Activated B cell treated with CpG ODN at 0.5 μM for 24 hours (primary cell): ENCODE measurements at regions of chr9 and their contacts with region 1.

Region 1: DNA sequence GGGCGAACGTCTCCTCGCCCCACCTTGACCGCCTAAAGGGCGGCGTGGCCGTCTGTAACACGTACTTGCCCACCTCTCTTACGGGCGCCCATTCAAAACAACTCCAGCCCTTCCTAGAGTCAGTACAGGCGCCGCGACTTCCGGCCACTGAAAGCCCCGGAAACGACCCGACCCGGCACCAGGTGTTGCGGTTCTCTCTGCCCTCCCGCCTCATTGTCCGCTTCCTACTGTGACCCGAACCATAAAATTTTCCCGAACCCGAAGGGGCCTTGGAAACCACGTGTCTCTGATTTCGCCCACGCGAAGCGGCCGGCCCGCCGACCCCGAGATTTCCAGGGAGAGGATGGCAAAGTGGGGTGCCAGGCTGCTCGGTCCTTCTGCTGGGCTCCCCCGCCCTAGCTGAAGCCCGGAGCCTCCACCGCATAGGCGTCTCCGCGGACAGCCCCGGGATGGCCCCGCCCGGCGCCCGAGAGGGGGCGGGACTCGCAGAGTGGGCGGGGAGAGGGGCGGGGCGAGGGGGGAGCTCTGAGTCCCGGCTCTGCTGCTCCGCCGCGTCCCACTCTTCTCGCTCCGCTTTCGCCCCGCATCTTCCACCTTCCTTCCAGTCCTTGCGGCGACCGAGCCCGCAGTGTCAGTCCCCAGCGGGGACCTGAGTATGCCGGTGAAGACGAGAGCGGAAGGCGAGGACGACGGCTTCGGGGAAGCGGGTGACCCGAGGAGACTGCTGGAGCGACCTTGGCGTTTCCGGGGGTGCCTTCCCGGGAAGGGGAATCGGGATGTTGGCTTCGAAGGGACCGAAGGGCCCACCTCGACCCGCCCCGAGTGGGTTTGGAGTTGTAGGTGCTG is 684 bp upstream of the PTGES2 start:
- DNase-seq: peak; percentile 90
- ATAC-seq: peak; percentile 79
- H3K4me3 Mint-ChIP-seq: peak overlapping the region; percentile 97
- H3K27ac Mint-ChIP-seq: peak overlapping the region; percentile 99
- H3K4me1 Mint-ChIP-seq: peaks cover 34% of the 10 kb centered on the region
- H3K27me3 Mint-ChIP-seq: peaks cover 3% of the 10 kb centered on the region
- CTCF ChIP-seq: no peak

Region 2: GRCh38 chr9:127224178-127224882 is 903.9 kb before region 1 on chr9:
- CTCF ChIA-PET with region 1: no interaction called
- POLR2A ChIA-PET with region 1: no interaction called
- intact Hi-C with region 1: loop called (anchors 10 kb)
- DNase-seq: peak; percentile 94
- ATAC-seq: peak; percentile 79
- H3K4me3 Mint-ChIP-seq: peak overlapping the region; percentile 85
- H3K27ac Mint-ChIP-seq: peak overlapping the region; percentile 73
- H3K4me1 Mint-ChIP-seq: peaks cover 41% of the 10 kb centered on the region
- H3K27me3 Mint-ChIP-seq: peaks cover 3% of the 10 kb centered on the region
- CTCF ChIP-seq: no peak

Region 3: DNA sequence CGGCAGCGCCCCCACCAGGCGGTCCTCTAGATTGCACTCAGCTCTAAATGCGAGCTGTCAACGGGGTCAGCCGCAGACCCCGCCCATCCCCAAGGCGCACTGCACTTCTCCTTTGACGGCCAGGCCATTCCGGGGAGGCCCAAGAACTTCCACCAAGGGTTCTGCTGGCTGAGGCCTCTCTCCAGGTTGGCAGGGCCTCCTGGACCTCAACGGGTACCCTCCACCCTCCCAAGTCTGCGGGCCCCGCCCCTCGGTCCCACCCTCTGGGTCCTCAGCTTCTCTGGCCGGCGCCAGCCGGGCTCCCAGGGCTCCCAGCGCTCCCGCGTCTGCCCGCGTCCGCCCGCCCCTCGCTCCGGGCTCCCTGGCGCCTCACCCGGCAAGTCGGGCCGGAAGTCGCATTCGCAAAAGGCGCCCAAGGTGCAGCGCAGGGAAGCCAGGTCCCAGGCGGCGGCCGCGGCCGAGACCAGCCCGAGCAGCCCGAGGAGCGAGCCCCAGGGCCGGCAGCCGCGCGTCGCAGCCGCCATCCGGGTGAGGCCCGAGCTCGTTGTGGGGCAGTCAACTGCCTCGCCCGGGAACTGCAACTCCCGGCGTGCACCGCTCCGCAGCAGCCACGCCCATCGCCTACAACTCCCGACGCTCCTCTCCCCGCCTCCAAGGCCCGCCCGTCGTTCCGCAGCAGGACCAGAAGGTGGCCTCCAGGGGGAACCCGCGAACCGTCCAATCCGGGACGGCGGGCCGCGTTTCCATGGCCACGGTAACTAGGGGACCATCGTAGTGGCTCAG is 393.3 kb before region 1 on chr9 and contains the start of gene TOR2A:
- CTCF ChIA-PET with region 1: no interaction called
- POLR2A ChIA-PET with region 1: no interaction called
- intact Hi-C with region 1: no loop called
- DNase-seq: peak; percentile 96
- ATAC-seq: peak; percentile 92
- H3K4me3 Mint-ChIP-seq: peak within 1 kb of the TSS; percentile 83
- H3K27ac Mint-ChIP-seq: peak within 1 kb of the TSS; percentile 91
- H3K4me1 Mint-ChIP-seq: peaks cover 13% of the 10 kb centered on the region
- H3K27me3 Mint-ChIP-seq: no peaks in the 10 kb centered on the region
- CTCF ChIP-seq: peak; percentile 15
- total RNA-seq, gene TOR2A: 13.8 and 15.1 TPM in 2 replicates

Region 4: DNA sequence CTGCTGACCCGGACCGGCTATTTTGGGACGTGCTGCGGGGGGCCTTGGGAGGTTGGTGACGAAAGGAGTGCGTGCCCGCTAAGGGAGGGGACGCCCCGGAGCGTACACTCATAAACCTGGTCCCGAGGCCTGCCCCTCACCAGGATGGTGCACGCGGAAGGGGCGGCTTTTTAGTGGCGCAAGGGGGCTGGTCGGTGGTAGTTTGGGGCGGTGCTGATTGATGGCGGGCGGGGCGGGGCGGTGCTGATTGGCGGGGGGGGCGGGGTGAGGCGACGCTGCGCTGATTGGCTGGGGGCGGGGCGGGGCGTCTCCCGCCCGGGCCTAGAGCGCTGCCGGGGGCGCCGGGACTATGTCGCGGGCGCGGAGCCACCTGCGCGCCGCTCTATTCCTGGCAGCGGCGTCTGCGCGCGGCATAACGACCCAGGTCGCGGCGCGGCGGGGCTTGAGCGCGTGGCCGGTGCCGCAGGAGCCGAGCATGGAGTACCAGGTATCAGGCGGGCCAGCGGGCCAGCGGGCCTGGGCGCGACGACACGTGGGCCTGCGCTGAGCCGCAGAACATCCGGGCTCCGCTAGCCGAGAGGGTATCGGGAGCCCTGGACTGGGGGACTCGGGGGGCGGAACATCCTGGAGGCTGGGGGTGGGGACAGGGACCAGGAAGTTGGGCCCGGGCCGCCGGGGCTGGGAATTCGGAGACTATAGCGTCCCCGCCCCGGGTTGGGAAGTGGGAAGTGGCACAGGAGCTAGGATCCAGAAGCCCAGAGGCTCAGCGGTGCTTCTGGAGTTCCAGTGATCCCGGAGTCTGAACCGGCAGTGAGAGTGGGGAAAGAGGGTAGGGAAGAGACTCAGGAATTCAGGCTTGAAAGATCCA is 325.4 kb before region 1 on chr9 and contains the start of gene FPGS:
- CTCF ChIA-PET with region 1: no interaction called
- POLR2A ChIA-PET with region 1: interaction called, 5 read pairs
- intact Hi-C with region 1: loop called (anchors 5 kb)
- DNase-seq: peak; percentile 81
- ATAC-seq: peak; percentile 84
- H3K4me3 Mint-ChIP-seq: peak within 1 kb of the TSS; percentile 93
- H3K27ac Mint-ChIP-seq: peak within 1 kb of the TSS; percentile 87
- H3K4me1 Mint-ChIP-seq: peaks cover 32% of the 10 kb centered on the region
- H3K27me3 Mint-ChIP-seq: no peaks in the 10 kb centered on the region
- CTCF ChIP-seq: no peak
- total RNA-seq, gene FPGS: 105 and 135 TPM in 2 replicates

Region 5: GRCh38 chr9:127987103-127987614 is 141.1 kb before region 1 on chr9:
- CTCF ChIA-PET with region 1: no interaction called
- POLR2A ChIA-PET with region 1: no interaction called
- intact Hi-C with region 1: no loop called
- DNase-seq: no peak
- ATAC-seq: peak; percentile 35
- H3K4me3 Mint-ChIP-seq: peak overlapping the region; percentile 36
- H3K27ac Mint-ChIP-seq: peak overlapping the region; percentile 85
- H3K4me1 Mint-ChIP-seq: peaks cover 65% of the 10 kb centered on the region
- H3K27me3 Mint-ChIP-seq: no peaks in the 10 kb centered on the region
- CTCF ChIP-seq: no peak

Region 6: DNA sequence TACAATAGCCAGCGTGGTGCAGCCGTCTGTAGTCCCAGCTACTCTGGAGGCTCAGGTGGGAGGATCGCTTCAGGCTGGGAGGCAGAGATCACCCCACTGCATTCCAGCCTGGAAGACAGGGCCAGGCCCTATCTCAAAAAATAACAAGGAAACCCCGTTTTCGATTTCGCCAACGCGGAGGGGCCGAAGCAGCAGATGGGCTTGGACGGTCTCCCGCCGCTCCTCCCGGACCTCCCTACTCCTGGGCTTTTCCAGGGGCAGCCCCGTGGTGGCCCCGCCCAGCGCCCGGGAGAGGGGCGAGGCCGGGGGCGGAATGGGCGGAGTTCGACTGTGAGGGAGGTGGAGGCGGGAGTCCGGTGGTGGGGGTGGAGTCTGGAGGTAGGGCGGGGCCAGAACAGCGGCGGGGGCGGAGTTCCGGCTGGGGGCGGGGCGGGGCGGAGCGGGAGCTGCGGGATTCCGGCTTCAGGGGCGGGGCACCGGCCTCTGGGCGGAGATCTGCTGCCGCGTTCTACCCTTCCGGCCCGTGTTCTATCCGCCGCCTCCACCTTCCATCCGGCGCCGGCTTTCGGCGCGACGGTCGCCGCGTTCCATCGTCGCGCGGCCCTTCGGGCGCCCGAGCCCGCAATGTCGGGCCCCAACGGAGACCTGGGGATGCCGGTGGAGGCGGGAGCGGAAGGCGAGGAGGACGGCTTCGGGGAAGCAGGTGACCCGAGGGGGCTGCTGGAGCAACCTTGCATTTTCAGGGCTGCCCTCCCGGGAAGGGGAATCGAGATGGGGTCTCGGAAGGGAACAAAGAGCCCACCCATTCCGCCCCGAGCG is 31.8 kb after region 1 on chr9 and contains the start of gene BBLN:
- CTCF ChIA-PET with region 1: no interaction called
- POLR2A ChIA-PET with region 1: interaction called, 20 read pairs
- intact Hi-C with region 1: loop called (anchors 1 kb)
- DNase-seq: peak; percentile 85
- ATAC-seq: peak; percentile 94
- H3K4me3 Mint-ChIP-seq: peak within 1 kb of the TSS; percentile 81
- H3K27ac Mint-ChIP-seq: peak within 1 kb of the TSS; percentile 81
- H3K4me1 Mint-ChIP-seq: peaks cover 13% of the 10 kb centered on the region
- H3K27me3 Mint-ChIP-seq: no peaks in the 10 kb centered on the region
- CTCF ChIP-seq: no peak
- total RNA-seq, gene BBLN: 47.7 and 53.6 TPM in 2 replicates

Region 7: DNA sequence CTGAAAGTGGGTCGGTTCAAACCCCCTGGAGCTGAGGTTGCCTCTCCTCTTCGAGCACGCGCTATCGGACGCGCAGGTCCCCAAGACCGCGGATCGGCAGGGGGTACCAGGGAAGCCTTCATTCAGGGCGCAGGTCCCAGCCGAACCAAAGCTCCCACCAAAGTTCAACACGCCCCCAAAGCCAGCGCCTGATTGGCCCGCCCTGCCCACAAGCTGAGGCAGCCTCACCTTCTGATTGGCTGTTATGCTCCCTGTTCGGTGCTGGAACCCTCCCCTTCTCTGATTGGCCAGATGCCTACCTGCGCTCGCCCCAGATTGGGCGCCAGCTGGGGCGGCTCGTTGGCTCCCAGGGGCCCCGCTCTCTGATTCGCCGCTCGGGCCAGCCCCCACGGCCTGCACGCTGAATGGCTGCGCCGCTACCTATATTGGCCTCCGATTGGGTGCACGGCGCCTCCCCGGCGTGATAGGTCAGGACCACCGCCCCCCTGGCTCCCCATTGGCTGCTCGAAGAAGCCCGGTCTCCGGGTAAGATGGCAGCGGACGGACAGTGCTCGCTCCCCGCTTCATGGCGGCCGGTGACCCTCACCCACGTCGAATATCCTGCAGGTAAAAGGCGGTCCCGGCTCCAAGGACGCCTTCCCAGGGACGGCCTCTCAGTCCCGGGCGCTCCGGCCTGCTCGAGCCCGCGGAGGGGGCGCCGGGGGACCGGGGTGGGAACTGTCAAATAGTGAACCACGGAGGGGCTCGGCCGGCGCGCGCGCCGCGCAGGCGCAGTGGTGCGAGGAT is 952.6 kb after region 1 on chr9 and contains the start of gene DOLPP1:
- CTCF ChIA-PET with region 1: no interaction called
- POLR2A ChIA-PET with region 1: no interaction called
- intact Hi-C with region 1: loop called (anchors 2 kb)
- DNase-seq: peak; percentile 97
- ATAC-seq: peak; percentile 95
- H3K4me3 Mint-ChIP-seq: peak within 1 kb of the TSS; percentile 87
- H3K27ac Mint-ChIP-seq: peak within 1 kb of the TSS; percentile 76
- H3K4me1 Mint-ChIP-seq: peaks cover 29% of the 10 kb centered on the region
- H3K27me3 Mint-ChIP-seq: no peaks in the 10 kb centered on the region
- CTCF ChIP-seq: no peak
- total RNA-seq, gene DOLPP1: 10.9 and 11.3 TPM in 2 replicates